A673 (cell line): ENCODE measurements at regions of chr2 and their contacts with region 1.

Region 1: GRCh38 chr2:140108706-140109475 is 1328.7 kb upstream of the NXPH2 start:
- DNase-seq: no peak
- H3K4me3 ChIP-seq: no peak overlapping the region
- H3K27ac ChIP-seq: no peak overlapping the region
- H3K4me1 ChIP-seq: peaks cover 11% of the 10 kb centered on the region
- H3K27me3 ChIP-seq: no peaks in the 10 kb centered on the region
- CTCF ChIP-seq: no peak

Region 2: GRCh38 chr2:140136366-140136765 is 27.5 kb after region 1 on chr2:
- CTCF ChIA-PET with region 1: no interaction called
- POLR2A ChIA-PET with region 1: no interaction called
- intact Hi-C with region 1: loop called (anchors 5 kb)
- DNase-seq: no peak
- H3K4me3 ChIP-seq: no peak overlapping the region
- H3K27ac ChIP-seq: no peak overlapping the region
- H3K4me1 ChIP-seq: peaks cover 6% of the 10 kb centered on the region
- H3K27me3 ChIP-seq: no peaks in the 10 kb centered on the region
- CTCF ChIP-seq: no peak

Region 3: GRCh38 chr2:140586379-140586778 is 477.5 kb after region 1 on chr2:
- CTCF ChIA-PET with region 1: interaction called, 14 read pairs
- POLR2A ChIA-PET with region 1: no interaction called
- intact Hi-C with region 1: no loop called
- DNase-seq: peak; percentile 55
- H3K4me3 ChIP-seq: no peak overlapping the region
- H3K27ac ChIP-seq: no peak overlapping the region
- H3K4me1 ChIP-seq: no peaks in the 10 kb centered on the region
- H3K27me3 ChIP-seq: no peaks in the 10 kb centered on the region
- CTCF ChIP-seq: peak; percentile 73